OCI-LY7 (cell line): ENCODE measurements at regions of chr7 and their contacts with region 1.

Region 1: DNA sequence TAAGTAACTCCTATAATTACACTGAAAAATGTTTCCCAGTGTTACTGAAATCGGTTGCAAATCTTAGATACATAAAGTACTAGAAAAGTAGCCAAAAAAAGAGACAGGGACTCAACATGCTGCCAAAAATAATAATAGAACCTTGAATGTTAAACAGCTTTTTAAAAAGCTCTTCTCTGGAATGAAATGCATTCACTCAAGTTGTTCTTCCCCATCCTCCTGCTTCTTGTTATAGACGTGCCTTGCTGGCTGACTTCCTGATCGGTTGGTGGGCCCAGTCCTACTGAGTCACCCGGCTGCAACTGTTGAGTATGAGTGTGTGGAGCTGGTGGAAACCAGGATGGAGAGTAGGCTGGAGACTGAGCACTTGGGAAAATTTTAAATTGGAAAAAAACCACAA is 30.6 kb upstream of the RAPGEF5 start:
- DNase-seq: no peak
- H3K4me3 ChIP-seq: no peak overlapping the region
- H3K27ac ChIP-seq: no peak overlapping the region
- H3K4me1 ChIP-seq: peaks cover 73% of the 10 kb centered on the region
- CTCF ChIP-seq: no peak

Region 2: DNA sequence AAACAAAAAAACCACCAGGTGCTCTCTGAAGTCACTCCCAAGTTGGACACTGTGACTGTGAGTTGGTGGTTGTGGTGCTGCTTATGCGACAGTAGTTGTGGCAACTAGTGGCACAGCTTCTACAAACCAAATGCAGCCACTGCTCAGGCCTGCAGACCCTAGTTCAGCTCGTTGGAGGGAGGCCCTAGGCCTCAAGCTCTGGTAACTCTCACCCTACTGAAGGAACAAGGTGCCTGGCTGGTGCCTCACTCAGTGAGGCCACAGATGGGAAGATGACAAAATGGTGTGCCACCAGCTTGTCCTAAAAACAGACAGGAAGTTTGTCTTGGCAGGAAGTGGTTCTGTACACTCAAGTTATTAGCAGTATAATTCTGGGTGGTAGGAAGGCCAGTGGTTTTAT is 14.7 kb after region 1 on chr7:
- CTCF ChIA-PET with region 1: interaction called, 3 read pairs
- POLR2A ChIA-PET with region 1: interaction called, 105 read pairs
- intact Hi-C with region 1: no loop called
- DNase-seq: peak; percentile 72
- H3K4me3 ChIP-seq: peak overlapping the region; percentile 24
- H3K27ac ChIP-seq: peak overlapping the region; percentile 75
- H3K4me1 ChIP-seq: peaks cover 33% of the 10 kb centered on the region
- CTCF ChIP-seq: no peak

Region 3: GRCh38 chr7:22420973-22421635 is 33.5 kb after region 1 on chr7:
- CTCF ChIA-PET with region 1: no interaction called
- POLR2A ChIA-PET with region 1: interaction called, 20 read pairs
- intact Hi-C with region 1: no loop called
- DNase-seq: no peak
- H3K4me3 ChIP-seq: no peak overlapping the region
- H3K27ac ChIP-seq: peak overlapping the region; percentile 87
- H3K4me1 ChIP-seq: peaks cover 68% of the 10 kb centered on the region
- CTCF ChIP-seq: no peak

Region 4: GRCh38 chr7:22438994-22439393 is 51.4 kb after region 1 on chr7:
- CTCF ChIA-PET with region 1: interaction called, 3 read pairs
- POLR2A ChIA-PET with region 1: interaction called, 12 read pairs
- intact Hi-C with region 1: no loop called
- DNase-seq: peak; percentile 96
- H3K4me3 ChIP-seq: peak overlapping the region; percentile 39
- H3K27ac ChIP-seq: peak overlapping the region; percentile 99
- H3K4me1 ChIP-seq: peaks cover 98% of the 10 kb centered on the region
- CTCF ChIP-seq: no peak

Region 5: GRCh38 chr7:22996470-22996869 is 608.9 kb after region 1 on chr7:
- CTCF ChIA-PET with region 1: no interaction called
- POLR2A ChIA-PET with region 1: no interaction called
- intact Hi-C with region 1: no loop called
- DNase-seq: no peak
- H3K4me3 ChIP-seq: no peak overlapping the region
- H3K27ac ChIP-seq: no peak overlapping the region
- H3K4me1 ChIP-seq: peaks cover 63% of the 10 kb centered on the region
- CTCF ChIP-seq: no peak

Region 6: GRCh38 chr7:23597094-23598091 is 1209.8 kb after region 1 on chr7 and contains the start of gene CCDC126:
- CTCF ChIA-PET with region 1: no interaction called
- POLR2A ChIA-PET with region 1: no interaction called
- intact Hi-C with region 1: loop called (anchors 5 kb)
- DNase-seq: peak; percentile 91
- H3K4me3 ChIP-seq: peak within 1 kb of the TSS; percentile 83
- H3K27ac ChIP-seq: peak within 1 kb of the TSS; percentile 46
- H3K4me1 ChIP-seq: peaks cover 63% of the 10 kb centered on the region
- CTCF ChIP-seq: no peak
- total RNA-seq, gene CCDC126: 9.6 and 11.9 TPM in 2 replicates